MCF 10A (cell line): ENCODE measurements at regions of chr12 and their contacts with region 1.

Region 1: DNA sequence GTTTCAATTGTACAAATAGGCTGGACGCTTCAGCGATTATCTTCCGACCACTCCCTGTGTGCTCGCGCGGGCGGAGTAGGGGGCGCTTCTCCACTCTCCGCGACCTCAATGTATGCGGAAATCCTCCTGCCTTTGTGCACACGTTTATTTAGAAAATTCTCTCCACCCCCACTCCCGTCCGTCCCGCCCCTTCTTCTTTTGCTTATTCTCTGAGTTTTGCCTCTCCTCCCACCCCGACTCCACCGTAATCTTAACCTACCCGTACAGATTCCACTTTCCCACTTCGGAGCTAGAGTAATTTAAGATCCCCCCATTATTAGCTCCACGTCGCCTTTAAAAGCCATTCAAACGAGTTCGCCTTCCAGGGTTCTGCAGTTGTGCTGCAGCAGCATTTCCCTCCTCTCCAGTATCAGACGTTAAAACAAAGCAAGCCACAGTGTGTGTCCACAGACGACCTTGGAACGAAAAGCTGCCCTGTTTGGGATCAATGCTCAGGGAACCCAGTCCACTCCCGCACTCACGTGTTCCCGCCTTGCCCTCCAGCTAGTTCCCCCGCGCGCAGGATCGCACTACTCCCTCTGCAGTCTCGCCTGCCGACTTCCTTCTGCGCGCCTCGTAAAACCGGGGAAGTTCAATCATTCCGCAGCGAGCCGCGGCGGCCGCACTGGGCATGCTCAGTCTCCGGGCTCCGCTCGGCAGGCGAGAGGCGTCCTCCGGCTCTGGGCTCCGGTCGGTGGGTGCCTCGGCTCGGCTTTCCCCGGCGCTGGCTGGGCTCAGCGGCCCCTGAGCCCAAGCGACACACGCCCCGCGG is at the start of gene ANO6:
- DNase-seq: peak; percentile 88
- H3K4me3 Mint-ChIP-seq: peak within 1 kb of the TSS; percentile 89
- H3K27ac Mint-ChIP-seq: peak within 1 kb of the TSS; percentile 99
- H3K4me1 Mint-ChIP-seq: peaks cover 21% of the 10 kb centered on the region
- H3K27me3 Mint-ChIP-seq: no peaks in the 10 kb centered on the region
- CTCF ChIP-seq: no peak
- total RNA-seq, gene ANO6: 25.4 and 31.8 TPM in 2 replicates

Region 2: GRCh38 chr12:45050751-45051571 is 164.7 kb before region 1 on chr12 and contains the start of gene DBX2:
- CTCF ChIA-PET with region 1: no interaction called
- POLR2A ChIA-PET with region 1: no interaction called
- intact Hi-C with region 1: no loop called
- DNase-seq: no peak
- H3K4me3 Mint-ChIP-seq: no peak within 1 kb of the TSS
- H3K27ac Mint-ChIP-seq: no peak within 1 kb of the TSS
- H3K4me1 Mint-ChIP-seq: no peaks in the 10 kb centered on the region
- H3K27me3 Mint-ChIP-seq: peaks cover 86% of the 10 kb centered on the region
- CTCF ChIP-seq: no peak
- total RNA-seq, gene DBX2: not detected in 2 replicates

Region 3: GRCh38 chr12:45200491-45201043 is 15.1 kb before region 1 on chr12:
- CTCF ChIA-PET with region 1: interaction called, 10 read pairs
- POLR2A ChIA-PET with region 1: interaction called, 9 read pairs
- intact Hi-C with region 1: no loop called
- DNase-seq: peak; percentile 47
- H3K4me3 Mint-ChIP-seq: peak overlapping the region; percentile 3
- H3K27ac Mint-ChIP-seq: no peak overlapping the region
- H3K4me1 Mint-ChIP-seq: peaks cover 16% of the 10 kb centered on the region
- H3K27me3 Mint-ChIP-seq: no peaks in the 10 kb centered on the region
- CTCF ChIP-seq: no peak

Region 4: DNA sequence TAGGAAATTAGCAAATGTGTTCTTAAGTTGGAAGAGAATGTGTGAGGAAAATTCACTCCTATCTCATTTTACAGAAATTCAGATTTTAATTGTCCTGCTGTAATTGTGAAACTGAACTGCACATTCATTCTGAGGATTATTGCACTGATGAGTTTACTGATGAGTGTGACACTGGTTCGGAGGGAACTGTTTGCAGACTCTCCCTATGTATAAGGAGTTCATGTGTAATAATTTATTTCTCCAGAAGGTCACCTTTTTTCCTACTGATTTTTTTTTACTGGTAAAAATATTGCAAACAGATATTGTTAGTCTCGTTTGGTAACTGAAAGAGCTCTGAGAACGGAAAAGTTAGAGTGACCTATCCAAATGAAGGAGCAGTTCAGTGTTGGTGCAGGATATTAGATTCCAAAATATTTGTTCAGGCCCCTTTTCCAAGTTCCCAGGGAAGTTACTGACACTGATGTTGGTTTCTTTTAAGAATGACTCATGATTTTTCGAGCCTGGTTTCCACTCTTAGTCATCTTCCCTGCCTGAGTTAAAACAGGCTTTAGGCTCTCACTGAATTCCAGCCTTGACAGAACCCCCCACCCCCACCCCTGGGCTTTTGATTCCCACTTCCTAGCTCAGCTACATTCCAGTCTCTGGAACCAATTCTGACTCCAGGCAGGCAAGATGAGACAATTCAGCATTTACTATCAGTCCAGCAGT is 18.7 kb after region 1 on chr12:
- CTCF ChIA-PET with region 1: interaction called, 22 read pairs
- POLR2A ChIA-PET with region 1: interaction called, 192 read pairs
- intact Hi-C with region 1: loop called (anchors 1 kb)
- DNase-seq: peak; percentile 96
- H3K4me3 Mint-ChIP-seq: peak overlapping the region; percentile 5
- H3K27ac Mint-ChIP-seq: peak overlapping the region; percentile 77
- H3K4me1 Mint-ChIP-seq: peaks cover 36% of the 10 kb centered on the region
- H3K27me3 Mint-ChIP-seq: no peaks in the 10 kb centered on the region
- CTCF ChIP-seq: no peak

Region 5: DNA sequence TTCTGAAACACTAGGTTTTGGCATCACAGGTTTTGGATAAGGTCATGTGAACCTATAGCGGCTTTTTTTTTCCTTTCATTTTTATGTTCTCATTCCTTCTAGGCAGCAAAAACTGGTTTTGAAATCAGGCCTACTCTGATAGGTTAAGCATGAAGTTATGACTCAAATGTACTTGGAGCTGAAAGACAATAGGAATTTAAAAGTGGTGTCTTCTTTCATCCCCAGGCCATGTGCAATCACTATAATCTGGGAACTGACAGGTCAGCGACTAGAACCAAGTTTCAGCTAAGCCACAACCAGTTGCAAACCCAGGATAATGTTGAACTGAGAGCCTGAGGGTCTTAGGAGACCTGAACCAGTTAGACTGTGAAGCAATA is 74.6 kb after region 1 on chr12:
- CTCF ChIA-PET with region 1: interaction called, 6 read pairs
- POLR2A ChIA-PET with region 1: interaction called, 31 read pairs
- intact Hi-C with region 1: no loop called
- DNase-seq: peak; percentile 94
- H3K4me3 Mint-ChIP-seq: peak overlapping the region; percentile 18
- H3K27ac Mint-ChIP-seq: peak overlapping the region; percentile 54
- H3K4me1 Mint-ChIP-seq: peaks cover 18% of the 10 kb centered on the region
- H3K27me3 Mint-ChIP-seq: no peaks in the 10 kb centered on the region
- CTCF ChIP-seq: no peak

Region 6: GRCh38 chr12:45379261-45379660 is 163.6 kb after region 1 on chr12:
- CTCF ChIA-PET with region 1: no interaction called
- POLR2A ChIA-PET with region 1: no interaction called
- intact Hi-C with region 1: loop called (anchors 2 kb)
- DNase-seq: peak; percentile 84
- H3K4me3 Mint-ChIP-seq: no peak overlapping the region
- H3K27ac Mint-ChIP-seq: no peak overlapping the region
- H3K4me1 Mint-ChIP-seq: peaks cover 7% of the 10 kb centered on the region
- H3K27me3 Mint-ChIP-seq: no peaks in the 10 kb centered on the region
- CTCF ChIP-seq: no peak